Tibial artery (tissue), 4 donors: ENCODE measurements at regions of chr17 and their contacts with region 1.

Region 1: DNA sequence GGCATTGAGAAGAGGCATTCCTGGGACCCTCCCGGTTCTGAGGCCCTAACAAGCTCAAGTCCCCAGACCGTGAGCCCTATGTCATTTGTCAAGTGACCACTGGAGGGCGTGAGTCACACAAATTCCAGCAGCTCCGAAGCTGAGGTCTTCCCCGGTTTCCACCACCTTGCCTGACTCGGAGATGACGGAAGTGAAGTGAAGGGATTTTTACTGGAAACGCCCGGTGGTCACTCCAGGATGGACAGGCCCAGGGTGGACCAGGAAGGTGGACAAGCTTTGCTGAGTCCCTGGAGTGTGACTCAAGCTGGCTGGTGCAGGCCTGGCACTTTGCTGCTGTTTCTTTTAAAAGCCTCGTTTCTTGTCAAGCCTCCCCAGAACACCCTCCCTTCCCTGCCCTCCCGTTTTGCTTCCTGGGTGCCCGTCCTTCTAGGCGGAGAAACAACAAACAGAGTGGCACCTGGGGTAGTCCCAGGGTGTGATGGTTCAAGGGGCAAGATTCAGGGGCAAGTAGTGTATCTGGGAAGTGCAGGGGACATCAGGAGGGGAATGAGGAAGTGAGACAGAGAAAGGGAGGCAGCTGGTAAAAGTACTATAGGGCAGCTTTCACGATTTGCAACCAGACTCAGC is 5.3 kb upstream of the NOS2 start:
- DNase-seq: peak; percentile 80 to 87
- H3K4me3 ChIP-seq: peak overlapping the region; percentile 28 to 44
- H3K27ac ChIP-seq: peak overlapping the region; percentile 18 to 45
- H3K4me1 ChIP-seq: peaks cover 0 to 7% (median 6%) of the 10 kb centered on the region in 4 donors
- H3K27me3 ChIP-seq: no peaks in the 10 kb centered on the region
- CTCF ChIP-seq: peak; percentile 77 to 85

Region 2: DNA sequence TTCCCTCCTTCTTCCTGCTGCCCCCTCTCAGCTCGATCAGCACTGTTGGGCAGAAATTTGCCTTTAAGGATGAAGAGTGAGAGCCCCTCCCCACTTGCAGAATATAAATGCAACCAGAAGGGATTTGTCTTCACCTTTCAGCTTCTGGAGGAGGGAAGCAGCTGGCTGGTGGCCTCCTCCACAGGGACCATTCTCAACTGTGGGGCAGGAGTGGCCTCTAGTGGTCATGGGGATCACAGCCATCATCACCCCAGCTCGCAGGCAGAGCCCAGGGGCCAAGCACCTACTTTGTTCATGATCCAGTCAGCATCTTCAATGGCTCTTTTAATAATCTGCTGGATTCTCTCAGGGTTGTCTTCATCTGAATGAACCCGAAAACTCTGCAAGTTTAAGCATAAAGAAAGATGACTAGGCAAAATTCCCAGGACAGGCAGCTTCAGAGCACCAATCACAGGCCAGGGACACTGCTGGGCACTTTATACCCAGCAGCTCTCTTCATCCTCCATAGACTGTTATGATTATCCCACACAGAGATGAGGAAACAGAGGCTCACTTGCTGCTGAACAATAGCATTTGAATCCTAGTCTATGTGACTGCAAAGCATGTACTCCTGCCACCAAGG is 74.5 kb after region 1 on chr17:
- intact Hi-C with region 1: loop called (anchors 10 kb)
- DNase-seq: peak in 1 of 2 donors; percentile 47
- H3K4me3 ChIP-seq: no peak overlapping the region
- H3K27ac ChIP-seq: no peak overlapping the region
- H3K4me1 ChIP-seq: no peaks in the 10 kb centered on the region
- H3K27me3 ChIP-seq: no peaks in the 10 kb centered on the region
- CTCF ChIP-seq: peak; percentile 41 to 51

Region 3: DNA sequence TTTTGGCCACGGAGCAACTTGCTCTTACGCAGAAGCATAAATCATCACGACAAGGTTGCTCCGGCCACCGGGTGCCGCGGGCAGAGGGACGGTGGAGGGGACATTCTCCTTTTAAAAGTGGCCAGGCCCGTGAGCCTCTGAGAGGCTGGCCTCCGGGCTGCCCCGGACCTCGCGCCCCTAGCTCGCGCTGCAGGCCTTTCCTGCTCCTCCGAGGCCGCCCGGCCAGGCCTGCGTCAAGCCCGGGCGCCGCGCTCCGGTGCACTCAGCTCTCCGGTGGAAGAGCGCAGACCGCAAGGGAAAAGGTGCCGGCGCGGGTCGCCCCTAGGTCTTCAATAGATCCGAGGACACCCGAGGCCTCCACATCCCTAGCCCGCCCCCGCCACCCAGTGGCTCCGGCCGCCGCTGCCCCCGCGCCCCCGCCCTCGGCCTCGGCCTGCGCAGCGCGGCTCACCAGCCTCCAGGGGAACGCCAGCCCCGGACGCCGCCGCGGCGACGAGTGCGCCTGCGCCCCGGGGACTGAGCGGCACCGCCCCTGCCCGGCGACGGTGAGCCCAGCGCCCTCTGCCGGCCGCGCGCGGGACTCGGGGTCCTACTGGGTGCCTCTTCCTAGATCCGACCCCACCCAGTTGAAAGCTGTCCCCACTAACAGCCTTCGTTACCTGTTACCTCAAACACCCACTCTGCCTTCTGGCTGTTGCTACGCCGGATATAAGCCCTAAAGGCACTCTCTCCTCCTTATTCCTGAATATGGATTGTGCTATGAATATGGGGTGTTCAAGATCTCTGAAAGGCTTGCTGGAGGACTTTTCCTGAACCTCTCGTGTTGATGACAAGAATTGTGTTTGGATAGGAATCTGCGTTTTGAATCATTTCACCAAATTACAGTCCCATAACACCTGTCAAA is 87.5 kb after region 1 on chr17 and contains the start of gene LYRM9:
- intact Hi-C with region 1: loop called (anchors 5 kb)
- DNase-seq: peak; percentile 88 to 94
- H3K4me3 ChIP-seq: peak within 1 kb of the TSS; percentile 85 to 87
- H3K27ac ChIP-seq: peak within 1 kb of the TSS; percentile 88 to 89
- H3K4me1 ChIP-seq: peaks cover 0 to 27% (median 3%) of the 10 kb centered on the region in 4 donors
- H3K27me3 ChIP-seq: peaks cover 0 to 3% of the 10 kb centered on the region in 2 donors
- CTCF ChIP-seq: peak; percentile 89 to 96

Region 4: GRCh38 chr17:28125530-28126378 is 320.1 kb after region 1 on chr17:
- intact Hi-C with region 1: no loop called
- DNase-seq: no peak
- H3K4me3 ChIP-seq: no peak overlapping the region
- H3K27ac ChIP-seq: no peak overlapping the region
- H3K4me1 ChIP-seq: no peaks in the 10 kb centered on the region
- H3K27me3 ChIP-seq: no peaks in the 10 kb centered on the region
- CTCF ChIP-seq: no peak